ENCODE measurements at regions of chr11 and their contacts with region 1.

Region 1: DNA sequence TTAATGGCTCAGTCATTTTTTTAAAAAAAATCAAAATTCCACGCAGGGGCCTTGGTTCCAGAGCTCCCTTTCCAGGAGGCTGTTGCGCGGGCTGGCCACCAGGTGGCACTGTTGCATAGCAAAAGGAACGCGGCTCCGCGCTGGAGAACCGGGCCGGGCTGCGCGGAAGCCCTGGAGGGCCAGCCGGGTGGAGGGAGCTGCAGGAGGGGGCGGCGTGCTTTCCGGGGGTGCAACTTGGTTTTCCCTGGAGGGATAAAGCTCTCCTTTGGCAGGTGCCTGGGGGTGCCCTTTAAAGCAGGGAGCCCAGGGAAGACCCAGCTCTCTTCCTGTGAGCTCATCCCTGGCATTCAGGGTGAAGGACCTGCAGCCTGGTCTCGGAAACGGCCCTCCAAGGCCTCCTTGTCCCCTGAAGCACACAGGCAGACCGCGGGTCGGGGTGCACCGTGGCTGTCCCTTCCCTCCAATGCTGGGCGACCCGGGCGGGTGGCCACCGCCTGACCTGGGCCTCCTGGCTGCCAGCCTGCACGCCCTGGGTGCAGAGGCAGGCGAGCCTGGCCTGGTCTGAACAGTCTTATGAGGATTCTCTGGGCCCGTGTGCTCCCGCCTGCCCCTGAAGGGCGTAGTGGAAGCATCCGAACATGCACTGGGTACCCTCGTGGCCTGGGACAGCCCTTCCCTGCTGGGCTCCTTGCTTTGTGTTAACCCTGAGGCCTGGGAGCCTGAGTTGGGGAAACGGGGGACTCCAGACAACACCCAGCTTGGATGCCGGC is 23.4 kb downstream of the KRTAP5-5 start:
- DNase-seq: peak; percentile 88
- ATAC-seq: peak; percentile 82
- H3K4me3 Mint-ChIP-seq: no peak overlapping the region
- H3K27ac Mint-ChIP-seq: no peak overlapping the region
- H3K4me1 Mint-ChIP-seq: no peaks in the 10 kb centered on the region
- H3K27me3 Mint-ChIP-seq: peaks cover 21% of the 10 kb centered on the region
- CTCF ChIP-seq: peak; percentile 99

Region 2: GRCh38 chr11:1598816-1599215 is 54.1 kb before region 1 on chr11:
- CTCF ChIA-PET with region 1: interaction called, 11 read pairs
- POLR2A ChIA-PET with region 1: no interaction called
- DNase-seq: no peak
- ATAC-seq: no peak
- H3K4me3 Mint-ChIP-seq: no peak overlapping the region
- H3K27ac Mint-ChIP-seq: no peak overlapping the region
- H3K4me1 Mint-ChIP-seq: peaks cover 35% of the 10 kb centered on the region
- H3K27me3 Mint-ChIP-seq: peaks cover 57% of the 10 kb centered on the region
- CTCF ChIP-seq: no peak

Region 3: DNA sequence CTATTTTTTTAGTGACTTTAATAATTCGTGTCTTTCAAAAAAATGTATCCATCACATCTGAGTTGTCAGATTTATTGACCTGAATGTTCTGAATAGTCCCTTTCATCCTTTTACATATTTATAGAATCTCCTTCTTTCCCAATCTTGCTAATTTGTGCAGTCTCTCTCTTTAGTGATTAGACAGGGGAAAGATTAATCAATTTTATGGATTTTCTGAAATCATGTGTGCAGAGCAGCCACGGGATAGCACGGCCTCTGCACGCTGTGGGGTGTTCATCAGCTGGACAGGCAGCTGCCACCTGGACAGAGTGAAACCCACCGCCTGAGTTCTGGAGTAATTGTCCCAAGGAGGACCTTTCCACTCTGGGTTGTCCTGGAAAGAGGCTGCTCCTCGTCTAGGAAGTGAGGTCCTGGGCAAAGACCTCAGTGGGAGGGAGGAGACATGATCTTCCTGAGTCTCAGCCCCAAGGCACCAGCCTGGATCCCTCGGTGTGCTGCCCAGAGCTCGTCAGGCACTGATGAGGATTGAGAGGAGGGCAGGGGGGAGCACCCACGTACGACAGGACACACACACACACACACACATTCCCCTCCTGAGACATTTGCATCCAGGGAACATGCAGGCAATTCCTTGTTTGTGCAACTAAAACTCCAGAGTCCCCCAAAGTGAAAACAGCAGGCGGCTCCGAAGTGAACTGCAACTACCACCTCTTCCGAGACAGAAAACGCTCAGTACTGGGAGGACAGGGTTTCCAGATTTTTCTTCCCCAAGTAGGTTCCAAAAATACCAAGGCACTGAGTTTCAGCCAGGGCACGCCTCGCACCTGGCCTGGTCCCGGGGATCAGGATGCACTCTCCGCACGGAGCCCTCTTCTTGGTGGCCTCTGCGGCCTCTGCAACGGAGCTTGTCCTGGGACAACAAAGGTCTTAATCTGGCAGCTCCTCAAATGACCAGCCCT is 21.5 kb after region 1 on chr11:
- CTCF ChIA-PET with region 1: interaction called, 45 read pairs
- POLR2A ChIA-PET with region 1: no interaction called
- DNase-seq: no peak
- ATAC-seq: no peak
- H3K4me3 Mint-ChIP-seq: no peak overlapping the region
- H3K27ac Mint-ChIP-seq: no peak overlapping the region
- H3K4me1 Mint-ChIP-seq: no peaks in the 10 kb centered on the region
- H3K27me3 Mint-ChIP-seq: peaks cover 10% of the 10 kb centered on the region
- CTCF ChIP-seq: no peak

Region 4: GRCh38 chr11:1763796-1764661 is 111.1 kb after region 1 on chr11 and contains the start of gene CTSD:
- CTCF ChIA-PET with region 1: interaction called, 17 read pairs
- POLR2A ChIA-PET with region 1: no interaction called
- DNase-seq: peak; percentile 87
- ATAC-seq: peak; percentile 73
- H3K4me3 Mint-ChIP-seq: peak within 1 kb of the TSS; percentile 93
- H3K27ac Mint-ChIP-seq: peak within 1 kb of the TSS; percentile 91
- H3K4me1 Mint-ChIP-seq: 0 out of 2 replicates have a peak, but pooled peaks cover 3% of the 10 kb centered on the region
- H3K27me3 Mint-ChIP-seq: 0 out of 2 replicates have a peak, but pooled peaks cover 3% of the 10 kb centered on the region
- CTCF ChIP-seq: no peak
- total RNA-seq, gene CTSD: 194 to 199 TPM (median 198 TPM) in 3 replicates

Region 5: DNA sequence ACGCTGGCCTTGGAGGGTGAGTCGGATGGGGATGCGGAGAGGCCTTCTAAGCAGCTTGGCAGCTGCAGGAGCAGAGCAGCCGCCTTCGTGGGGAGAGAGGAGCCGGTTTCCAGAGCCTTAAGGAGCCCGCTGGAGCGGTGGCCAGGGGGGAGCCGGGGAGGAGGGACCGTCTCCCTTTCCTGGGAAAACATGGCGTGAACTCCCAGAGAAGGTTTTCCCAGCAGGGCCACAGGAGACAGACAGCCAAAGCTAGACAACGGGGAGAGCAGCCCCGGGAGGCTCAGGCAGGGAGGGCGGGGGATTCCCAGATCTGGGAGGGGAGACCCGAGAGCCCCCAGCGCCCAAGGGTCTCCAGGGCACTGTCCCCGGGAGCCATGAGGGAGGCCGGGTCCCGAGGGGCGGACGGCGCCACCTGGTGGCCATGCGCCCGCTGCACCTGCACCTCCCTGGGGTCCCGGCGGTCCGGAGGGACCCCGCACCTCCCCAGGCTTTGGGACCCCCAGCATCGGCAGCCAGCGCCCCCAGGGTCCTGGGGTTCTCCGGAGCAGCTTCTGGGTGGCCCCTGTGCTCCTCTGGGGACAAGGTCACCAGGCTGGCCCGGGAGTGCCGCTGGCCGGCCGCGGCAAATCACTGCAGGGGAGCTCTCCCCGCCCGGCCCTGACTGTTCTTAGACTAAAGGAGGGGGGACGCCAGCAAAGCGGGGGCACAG is 179.4 kb after region 1 on chr11:
- CTCF ChIA-PET with region 1: interaction called, 190 read pairs
- POLR2A ChIA-PET with region 1: no interaction called
- DNase-seq: peak; percentile 77
- ATAC-seq: peak; percentile 75
- H3K4me3 Mint-ChIP-seq: peak overlapping the region; percentile 49
- H3K27ac Mint-ChIP-seq: no peak overlapping the region
- H3K4me1 Mint-ChIP-seq: 0 out of 2 replicates have a peak, but pooled peaks cover 2% of the 10 kb centered on the region
- H3K27me3 Mint-ChIP-seq: peaks cover 5% of the 10 kb centered on the region
- CTCF ChIP-seq: peak; percentile 97

Region 6: DNA sequence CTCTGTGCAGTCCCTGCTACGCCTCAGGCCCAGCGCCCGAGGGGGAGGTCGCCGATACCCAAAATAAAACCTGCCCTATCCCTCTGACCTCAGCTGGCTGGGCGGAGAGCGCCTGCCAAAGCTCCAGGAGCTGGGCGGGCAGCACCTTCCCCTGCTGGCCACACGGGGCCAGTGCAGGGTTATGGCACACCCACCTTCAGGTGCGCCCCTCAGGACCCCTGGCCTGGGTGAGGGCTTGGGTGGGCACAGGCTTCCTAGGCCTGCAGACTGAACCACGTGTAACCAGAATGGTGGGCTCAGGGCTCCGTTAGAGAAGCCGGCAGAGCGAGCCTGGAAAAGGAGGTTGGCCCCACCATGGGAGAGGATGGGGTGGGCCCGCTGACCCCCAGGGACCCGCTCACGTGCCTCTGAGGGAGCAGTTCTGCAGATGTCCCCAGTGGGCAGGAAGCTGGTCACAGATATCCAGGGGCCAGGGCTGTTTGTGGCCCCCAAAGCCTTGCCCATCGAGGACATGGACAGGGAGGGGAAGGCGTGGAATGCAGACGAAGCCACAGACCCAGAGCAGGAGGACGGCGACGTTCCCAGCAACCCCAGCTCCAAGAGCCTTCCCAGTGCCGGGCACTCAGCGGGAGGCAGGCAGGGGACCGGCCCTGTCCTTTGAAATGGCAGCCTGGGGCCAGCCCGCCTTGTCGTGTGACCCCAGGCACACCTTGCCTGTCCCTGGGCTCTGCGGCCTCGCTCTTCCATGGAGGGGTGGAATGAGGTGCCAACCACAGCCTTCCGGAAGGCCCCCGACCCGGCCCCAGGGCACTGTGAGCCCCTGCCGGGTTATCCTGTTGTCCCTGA is 264.9 kb after region 1 on chr11:
- CTCF ChIA-PET with region 1: interaction called, 11 read pairs
- POLR2A ChIA-PET with region 1: no interaction called
- DNase-seq: peak; percentile 49
- ATAC-seq: peak; percentile 86
- H3K4me3 Mint-ChIP-seq: no peak overlapping the region
- H3K27ac Mint-ChIP-seq: no peak overlapping the region
- H3K4me1 Mint-ChIP-seq: no peaks in the 10 kb centered on the region
- H3K27me3 Mint-ChIP-seq: no peaks in the 10 kb centered on the region; the same call in 1 of the 2 replicates
- CTCF ChIP-seq: peak; percentile 55; the same call in 1 of the 2 replicates

Measured in WTC11 (cell line).